Breast epithelium (tissue), 4 donors: ENCODE measurements at regions of chr10 and their contacts with region 1.

Region 1: GRCh38 chr10:62788861-62789467 is 15.6 kb upstream of the ADO start:
- DNase-seq: no peak
- H3K4me3 ChIP-seq: no peak overlapping the region
- H3K27ac ChIP-seq: no peak overlapping the region
- H3K4me1 ChIP-seq: no peaks in the 10 kb centered on the region
- H3K27me3 ChIP-seq: no peaks in the 10 kb centered on the region
- CTCF ChIP-seq: no peak
- POLR2A ChIP-seq: no peak

Region 2: GRCh38 chr10:62816331-62817120 is 27.6 kb after region 1 on chr10 and contains the start of gene EGR2:
- intact Hi-C with region 1: loop called (anchors 2 kb)
- DNase-seq: peak; percentile 88 to 96
- H3K4me3 ChIP-seq: peak within 1 kb of the TSS; percentile 65 to 94 (median 72)
- H3K27ac ChIP-seq: peak within 1 kb of the TSS; percentile 82 to 94
- H3K4me1 ChIP-seq: peaks cover 10 to 14% of the 10 kb centered on the region in 2 donors
- H3K27me3 ChIP-seq: peaks cover 0 to 18% of the 10 kb centered on the region in 2 donors
- CTCF ChIP-seq: no peak
- POLR2A ChIP-seq: no peak
- total RNA-seq, gene EGR2: 0.32 to 9.2 (median 4.3) TPM